Left cardiac atrium (tissue), 4 donors: ENCODE measurements at regions of chr21 and their contacts with region 1.

Region 1: GRCh38 chr21:38733973-38734546 is 71.7 kb upstream of the ETS2 start:
- DNase-seq: peak; percentile 88
- ATAC-seq: peak; percentile 93 to 95

Region 2: GRCh38 chr21:38505654-38506515 is 228.2 kb before region 1 on chr21:
- intact Hi-C with region 1: loop called in 1 of 2 experiments (anchors 5 kb)
- DNase-seq: no peak
- ATAC-seq: peak; percentile 88 to 90

Region 3: DNA sequence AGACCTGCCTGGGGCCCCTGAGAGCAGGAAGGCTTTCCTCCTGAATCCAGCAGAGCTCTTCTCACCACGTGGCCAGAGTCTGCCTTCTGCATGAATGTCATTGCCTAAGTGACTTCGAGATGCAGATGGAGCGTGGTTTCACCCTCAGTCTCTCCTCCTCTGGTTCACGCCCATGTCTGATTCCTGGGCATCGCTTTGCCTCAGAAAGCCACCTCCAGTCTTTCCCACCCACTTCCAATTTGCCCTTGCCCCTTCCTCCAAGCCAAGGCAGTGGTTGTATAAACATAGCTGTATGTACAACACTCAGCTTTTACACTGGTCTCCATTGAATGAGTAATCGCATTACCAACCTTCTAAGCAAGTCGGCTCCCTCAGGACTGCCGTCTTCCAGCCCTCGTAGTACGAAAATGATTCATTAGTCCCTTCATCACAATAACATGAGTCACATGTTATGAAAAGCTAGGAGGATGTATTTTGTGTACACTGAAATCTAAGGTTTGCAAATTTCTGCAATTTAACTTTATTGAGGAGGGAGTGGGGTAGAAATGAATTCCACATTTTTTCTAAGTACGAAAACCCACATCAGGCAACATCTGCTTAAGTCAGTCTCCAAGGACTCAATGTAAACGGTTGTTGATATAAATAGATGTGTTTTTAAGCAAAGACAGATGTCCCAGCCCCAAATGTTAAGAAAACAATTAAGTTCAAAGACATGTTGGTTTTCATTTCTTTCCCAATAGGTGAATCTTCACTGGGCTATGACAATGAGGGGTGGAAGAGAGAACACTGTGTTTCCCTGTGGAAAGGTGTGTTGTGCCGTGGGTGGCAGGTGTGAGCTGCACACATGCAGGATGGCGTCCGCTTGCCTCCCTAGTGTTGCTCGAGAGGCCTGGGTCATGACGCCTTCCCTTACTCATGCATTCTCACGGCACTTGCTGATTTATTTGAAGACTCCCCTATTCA is 39.3 kb after region 1 on chr21:
- intact Hi-C with region 1: no loop called
- DNase-seq: peak; percentile 59
- ATAC-seq: peak; percentile 41 to 89

Region 4: DNA sequence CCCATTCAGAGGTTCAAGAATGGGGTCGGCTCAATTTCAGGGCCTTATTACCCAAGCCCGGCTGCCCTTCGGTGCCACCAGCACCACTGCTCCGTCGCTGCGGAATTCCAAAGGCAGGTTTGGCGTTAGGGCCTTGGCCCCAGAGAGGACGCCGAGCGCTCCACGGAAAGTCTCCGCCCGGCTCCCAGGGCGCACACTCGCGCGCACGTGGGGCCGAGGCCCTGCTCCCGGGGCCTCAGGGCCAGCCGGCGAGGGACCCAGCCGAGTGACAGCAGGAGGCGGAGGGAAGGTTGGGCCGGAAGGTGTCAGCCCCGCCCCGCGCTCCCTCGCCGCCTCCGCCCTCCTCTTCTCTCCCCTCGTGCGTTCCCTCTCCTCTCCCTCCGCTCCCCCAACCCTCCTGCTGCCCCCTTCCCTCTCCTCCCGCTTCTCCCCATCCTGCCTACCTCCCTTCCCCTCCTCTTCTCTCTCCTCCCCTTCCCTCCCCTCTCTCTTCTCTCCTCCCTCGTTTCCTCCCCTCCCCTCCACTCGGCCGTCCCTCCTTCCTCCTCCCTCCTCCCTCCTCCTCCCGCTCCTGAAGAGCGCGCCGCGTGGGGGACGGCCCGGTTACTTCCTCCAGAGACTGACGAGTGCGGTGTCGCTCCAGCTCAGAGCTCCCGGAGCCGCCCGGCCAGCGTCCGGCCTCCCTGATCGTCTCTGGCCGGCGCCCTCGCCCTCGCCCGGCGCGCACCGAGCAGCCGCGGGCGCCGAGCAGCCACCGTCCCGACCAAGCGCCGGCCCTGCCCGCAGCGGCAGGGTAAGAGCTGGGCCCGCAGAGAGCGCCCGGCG is 71.5 kb after region 1 on chr21 and contains the start of gene ETS2:
- intact Hi-C with region 1: loop called in 1 of 2 experiments (anchors 10 kb)
- DNase-seq: peak; percentile 92
- ATAC-seq: peak; percentile 91 to 92
- total RNA-seq, gene ETS2: 48.7 to 114 TPM

Region 5: GRCh38 chr21:39125752-39126485 is 391.9 kb after region 1 on chr21:
- intact Hi-C with region 1: loop called (anchors 1 to 2 kb)
- DNase-seq: peak; percentile 40
- ATAC-seq: peak; percentile 93 to 95

Region 6: GRCh38 chr21:39131791-39132190 is 397.7 kb after region 1 on chr21:
- intact Hi-C with region 1: loop called (anchors 1 to 2 kb)
- DNase-seq: no peak
- ATAC-seq: no peak

Region 7: GRCh38 chr21:39137248-39138178 is 403.5 kb after region 1 on chr21:
- intact Hi-C with region 1: loop called (anchors 1 to 2 kb)
- DNase-seq: no peak
- ATAC-seq: peak; percentile 38 to 80